Activated CD8-positive, alpha-beta T cell treated with anti-CD3 and anti-CD28 coated beads, Interleukin-2, amount 10 ng/mL, durations not matched to agents 7 days and 5 days (primary cell): ENCODE measurements at regions of chr9 and their contacts with region 1.

Region 1: DNA sequence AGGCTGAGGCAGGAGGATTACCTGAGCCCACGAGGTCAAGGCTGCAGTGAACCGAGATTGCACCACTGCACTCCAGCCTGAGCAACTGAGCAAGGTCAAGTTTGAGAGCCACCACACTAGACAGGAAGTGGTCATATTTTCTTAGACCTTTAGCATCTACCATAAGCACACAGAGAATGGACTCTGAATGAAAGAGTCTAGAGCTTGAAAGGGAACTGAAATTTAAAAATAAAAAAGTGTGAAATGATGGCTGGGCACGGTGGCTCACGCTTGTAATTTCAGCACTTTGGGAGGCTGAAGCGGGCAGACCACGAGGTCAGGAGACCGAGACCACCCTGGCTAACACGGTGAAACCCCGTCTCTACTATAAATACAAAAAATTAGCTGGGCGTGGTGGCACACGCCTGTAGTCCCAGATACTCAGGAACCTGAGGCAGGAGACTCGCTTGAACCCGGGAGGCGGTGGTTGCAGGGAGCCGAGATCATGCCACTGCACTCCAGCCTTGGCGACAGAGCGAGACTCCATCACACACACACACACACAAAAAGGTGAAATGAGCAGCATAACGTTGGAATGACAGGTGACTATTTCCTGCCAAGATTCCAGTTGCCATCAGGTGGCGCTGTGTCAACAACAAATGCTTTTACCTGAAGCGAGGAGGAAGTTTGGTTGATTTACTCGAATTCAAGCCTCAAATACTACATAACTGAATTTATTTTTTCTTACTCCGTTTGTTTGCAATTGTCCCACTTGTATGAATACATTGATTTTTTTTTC is 21.3 kb upstream of the AK3 start:
- DNase-seq: peak; percentile 90
- ATAC-seq: peak; percentile 81
- H3K4me3 Mint-ChIP-seq: peak overlapping the region; percentile 50
- H3K27ac Mint-ChIP-seq: peak overlapping the region; percentile 62
- H3K4me1 Mint-ChIP-seq: peaks cover 20% of the 10 kb centered on the region
- H3K27me3 Mint-ChIP-seq: peaks cover 15% of the 10 kb centered on the region

Region 2: DNA sequence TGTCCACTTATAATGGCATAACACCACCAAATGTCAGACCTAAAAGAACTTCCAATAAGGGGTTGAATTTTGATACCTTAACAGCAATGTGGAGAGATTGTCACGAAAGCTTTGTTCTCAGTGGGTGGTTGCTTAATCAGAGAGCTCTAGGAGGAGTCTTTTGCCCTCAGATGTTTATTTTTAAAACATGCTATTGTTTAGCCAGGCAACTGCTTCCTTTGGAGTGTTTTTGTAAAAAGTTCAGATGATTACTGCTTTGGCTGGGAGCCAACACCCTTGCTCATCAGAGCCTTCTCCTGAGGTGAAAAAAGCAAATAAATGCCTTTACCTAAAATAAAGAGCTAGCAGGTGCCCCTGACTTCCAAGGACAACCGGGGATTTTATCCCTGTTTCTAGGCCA is 207.0 kb before region 1 on chr9:
- CTCF ChIA-PET with region 1: no interaction called
- POLR2A ChIA-PET with region 1: no interaction called
- DNase-seq: no peak
- ATAC-seq: no peak
- H3K4me3 Mint-ChIP-seq: no peak overlapping the region
- H3K27ac Mint-ChIP-seq: no peak overlapping the region
- H3K4me1 Mint-ChIP-seq: peaks cover 6% of the 10 kb centered on the region
- H3K27me3 Mint-ChIP-seq: peaks cover 4% of the 10 kb centered on the region

Region 3: DNA sequence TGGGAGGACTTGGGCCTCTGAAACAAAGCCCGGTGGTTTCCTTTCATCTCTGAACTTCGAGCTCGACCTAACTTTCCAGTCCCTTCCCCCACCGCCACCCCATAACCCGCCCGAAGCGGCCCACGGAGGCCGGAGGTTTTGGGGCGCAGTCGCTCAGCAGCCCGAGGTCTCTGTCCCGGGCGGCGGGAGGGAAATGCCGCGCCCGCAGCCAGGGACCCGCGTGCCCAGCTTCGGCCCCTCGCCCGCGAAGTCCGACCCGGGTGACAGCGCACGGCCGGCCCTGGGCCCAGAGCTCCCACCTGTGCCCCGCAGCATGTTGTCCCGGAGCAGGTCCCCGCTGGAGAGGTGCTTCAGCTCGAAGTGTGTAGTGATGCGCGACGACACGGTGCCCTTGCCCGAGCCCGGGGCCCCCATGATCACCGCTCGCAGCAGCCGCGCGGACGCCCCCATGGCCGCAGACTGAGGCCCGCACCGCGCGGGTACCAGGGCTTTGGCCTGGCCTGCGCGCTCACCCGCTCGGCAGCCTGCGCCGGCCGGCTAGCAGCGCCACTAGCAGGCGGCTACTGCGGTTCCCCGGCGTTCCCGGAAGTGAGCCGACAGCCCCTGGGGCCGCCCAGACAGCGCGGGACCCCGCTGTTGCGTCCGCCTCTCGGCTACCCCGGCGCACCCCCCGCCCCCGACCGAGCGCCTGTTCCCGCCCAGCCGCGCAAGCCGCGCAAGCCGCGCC is 21.5 kb before region 1 on chr9 and contains the start of gene AK3:
- CTCF ChIA-PET with region 1: interaction called, 13 read pairs
- POLR2A ChIA-PET with region 1: no interaction called
- DNase-seq: peak; percentile 93
- ATAC-seq: peak; percentile 94
- H3K4me3 Mint-ChIP-seq: peak within 1 kb of the TSS; percentile 88
- H3K27ac Mint-ChIP-seq: peak within 1 kb of the TSS; percentile 90
- H3K4me1 Mint-ChIP-seq: peaks cover 30% of the 10 kb centered on the region
- H3K27me3 Mint-ChIP-seq: no peaks in the 10 kb centered on the region
- total RNA-seq, gene AK3: 34.8 to 35.4 TPM

Region 4: DNA sequence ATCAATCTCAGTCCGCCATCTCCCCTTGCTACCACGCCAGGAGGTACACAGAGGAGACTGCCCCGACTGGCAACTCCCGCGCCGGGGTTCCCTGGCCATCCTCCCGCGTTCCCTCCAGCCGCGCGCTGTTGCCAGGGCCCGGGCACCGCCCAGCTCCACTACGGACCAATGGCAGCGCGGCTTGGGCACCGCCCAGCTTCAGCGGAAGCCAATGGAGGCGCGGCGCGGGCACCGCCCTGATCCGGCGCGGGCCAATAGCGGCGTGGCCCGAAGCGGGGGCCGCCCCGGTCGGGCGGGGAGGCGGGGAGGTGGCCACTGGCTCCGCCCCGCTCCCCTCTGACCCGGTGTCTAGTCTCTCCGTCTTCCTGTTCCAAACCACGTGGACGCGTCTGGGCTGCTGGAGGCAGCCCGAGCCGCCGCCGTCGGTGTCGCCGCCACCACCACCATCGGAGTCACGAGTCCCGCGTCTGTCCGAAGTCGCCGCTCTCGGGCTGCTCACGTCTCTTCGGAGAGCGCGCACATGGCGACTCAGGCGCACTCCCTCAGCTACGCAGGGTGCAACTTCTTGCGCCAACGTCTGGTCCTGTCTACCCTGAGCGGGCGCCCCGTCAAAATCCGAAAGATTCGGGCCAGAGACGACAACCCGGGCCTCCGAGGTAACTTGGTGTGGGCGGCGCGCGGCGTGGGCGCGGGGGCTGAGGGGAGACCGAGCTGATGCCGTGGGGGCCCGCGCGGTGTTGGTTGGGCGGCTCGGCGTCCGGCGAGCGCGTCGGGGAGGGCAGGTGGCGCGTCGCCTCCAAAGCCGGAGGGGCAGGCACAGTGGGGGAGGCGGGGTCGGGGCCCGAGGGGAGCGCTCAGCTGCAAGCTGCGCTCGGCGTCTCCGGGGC is 30.5 kb after region 1 on chr9 and contains the start of gene RCL1:
- CTCF ChIA-PET with region 1: interaction called, 24 read pairs
- POLR2A ChIA-PET with region 1: no interaction called
- DNase-seq: peak; percentile 97
- ATAC-seq: peak; percentile 98
- H3K4me3 Mint-ChIP-seq: peak within 1 kb of the TSS; percentile 95
- H3K27ac Mint-ChIP-seq: peak within 1 kb of the TSS; percentile 94
- H3K4me1 Mint-ChIP-seq: peaks cover 33% of the 10 kb centered on the region
- H3K27me3 Mint-ChIP-seq: peaks cover 9% of the 10 kb centered on the region
- total RNA-seq, gene RCL1: 16.8 TPM

Region 5: GRCh38 chr9:4984621-4985385 is 222.5 kb after region 1 on chr9 and contains the start of gene JAK2:
- CTCF ChIA-PET with region 1: interaction called, 89 read pairs
- POLR2A ChIA-PET with region 1: interaction called, 4 read pairs
- DNase-seq: peak; percentile 93
- ATAC-seq: peak; percentile 88
- H3K4me3 Mint-ChIP-seq: peak within 1 kb of the TSS; percentile 96
- H3K27ac Mint-ChIP-seq: peak within 1 kb of the TSS; percentile 97
- H3K4me1 Mint-ChIP-seq: peaks cover 48% of the 10 kb centered on the region
- H3K27me3 Mint-ChIP-seq: no peaks in the 10 kb centered on the region
- total RNA-seq, gene JAK2: 25.7 to 27.2 TPM

Region 6: DNA sequence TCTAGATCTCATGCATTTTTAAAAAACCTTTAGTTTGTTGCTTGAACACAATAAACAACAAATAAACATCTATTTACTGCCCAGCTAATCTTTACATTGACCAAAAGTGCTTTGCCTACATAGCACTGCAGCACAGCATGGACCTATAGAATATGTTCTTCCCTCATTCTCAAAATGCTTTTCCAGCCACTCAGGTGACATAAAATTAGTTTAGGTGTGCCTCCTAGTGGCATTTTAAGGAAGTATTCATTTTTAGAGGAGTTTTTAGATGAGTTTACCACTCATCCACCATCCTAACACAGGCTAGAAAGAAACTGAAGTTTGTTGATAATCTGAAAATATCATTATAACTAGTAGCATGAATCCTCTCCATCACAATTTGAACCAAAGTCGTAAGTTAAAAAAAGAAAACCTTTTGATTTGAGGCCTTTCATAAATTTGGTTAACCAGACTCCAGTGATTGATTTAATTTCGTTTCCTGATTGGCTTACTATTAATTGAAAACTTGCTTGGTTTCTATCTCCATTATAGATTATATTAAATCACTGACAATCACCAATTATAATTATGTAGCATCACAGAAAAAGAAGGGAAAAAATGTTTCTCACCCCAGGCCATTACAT is 662.8 kb after region 1 on chr9:
- CTCF ChIA-PET with region 1: interaction called, 11 read pairs
- POLR2A ChIA-PET with region 1: no interaction called
- DNase-seq: no peak
- ATAC-seq: peak; percentile 71
- H3K4me3 Mint-ChIP-seq: no peak overlapping the region
- H3K27ac Mint-ChIP-seq: no peak overlapping the region
- H3K4me1 Mint-ChIP-seq: no peaks in the 10 kb centered on the region
- H3K27me3 Mint-ChIP-seq: no peaks in the 10 kb centered on the region